Body of pancreas (tissue), 4 donors: ENCODE measurements at regions of chr16 and their contacts with region 1.

Region 1: GRCh38 chr16:73154063-73154870 is 106.3 kb upstream of the ZFHX3 start:
- DNase-seq: peak in 1 of 4 donors; percentile 71
- ATAC-seq: no peak
- H3K4me3 ChIP-seq: no peak overlapping the region
- H3K27ac ChIP-seq: peak overlapping the region in 1 of 4 donors; percentile 65
- H3K4me1 ChIP-seq: no peaks in the 10 kb centered on the region
- H3K27me3 ChIP-seq: no peaks in the 10 kb centered on the region
- CTCF ChIP-seq: no peak
- POLR2A ChIP-seq: peak in 1 of 3 donors; percentile 32

Region 2: DNA sequence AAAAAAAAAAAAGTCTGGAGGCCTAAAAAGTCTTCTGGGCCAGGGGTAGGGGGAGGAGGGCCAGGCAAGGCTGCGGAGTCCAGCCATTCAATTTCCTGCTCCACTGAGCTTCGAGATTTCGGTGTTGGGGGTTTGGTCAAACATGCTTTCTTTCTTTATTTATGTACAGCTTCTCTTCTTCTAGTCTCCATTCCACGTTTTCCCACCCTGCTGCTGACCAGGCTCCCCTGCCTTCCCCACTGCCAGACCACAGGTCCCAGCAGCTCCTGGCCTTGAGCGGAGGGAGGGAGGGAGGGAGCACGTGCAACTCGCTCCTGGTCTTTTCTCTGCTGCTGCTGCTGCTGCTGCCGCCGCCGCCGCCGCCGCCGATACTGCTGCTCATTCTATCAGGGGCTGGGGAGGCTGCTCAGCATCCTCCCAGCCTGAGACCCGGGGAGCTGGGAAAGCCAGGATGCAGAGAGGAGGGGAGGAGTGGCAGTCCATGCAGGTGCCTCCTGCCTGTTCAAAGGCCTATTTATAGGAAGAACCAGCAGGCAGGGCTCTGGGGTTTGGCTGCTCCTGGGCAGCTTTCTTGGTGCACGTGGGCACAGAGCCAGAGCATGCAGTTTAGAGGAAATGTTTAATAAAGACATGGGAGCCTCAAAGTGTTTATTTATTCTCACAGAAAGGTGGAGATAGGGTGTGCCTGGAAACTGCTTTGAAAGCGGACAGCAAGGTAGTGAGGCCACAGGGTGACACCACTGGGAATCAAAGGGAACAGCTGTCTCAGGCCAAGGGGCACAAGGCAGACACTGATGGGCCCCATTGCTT is 82.9 kb before region 1 on chr16:
- intact Hi-C with region 1: loop called (anchors 10 kb)
- DNase-seq: peak; percentile 68 to 80 (median 78)
- ATAC-seq: peak; percentile 66
- H3K4me3 ChIP-seq: no peak overlapping the region
- H3K27ac ChIP-seq: peak overlapping the region; percentile 65 to 86 (median 82)
- H3K4me1 ChIP-seq: peaks cover 31% of the 10 kb centered on the region
- H3K27me3 ChIP-seq: peaks cover 0 to 3% of the 10 kb centered on the region in 2 donors
- CTCF ChIP-seq: no peak
- POLR2A ChIP-seq: no peak